ENCODE measurements at regions of chr1 and their contacts with region 1.

Region 1: DNA sequence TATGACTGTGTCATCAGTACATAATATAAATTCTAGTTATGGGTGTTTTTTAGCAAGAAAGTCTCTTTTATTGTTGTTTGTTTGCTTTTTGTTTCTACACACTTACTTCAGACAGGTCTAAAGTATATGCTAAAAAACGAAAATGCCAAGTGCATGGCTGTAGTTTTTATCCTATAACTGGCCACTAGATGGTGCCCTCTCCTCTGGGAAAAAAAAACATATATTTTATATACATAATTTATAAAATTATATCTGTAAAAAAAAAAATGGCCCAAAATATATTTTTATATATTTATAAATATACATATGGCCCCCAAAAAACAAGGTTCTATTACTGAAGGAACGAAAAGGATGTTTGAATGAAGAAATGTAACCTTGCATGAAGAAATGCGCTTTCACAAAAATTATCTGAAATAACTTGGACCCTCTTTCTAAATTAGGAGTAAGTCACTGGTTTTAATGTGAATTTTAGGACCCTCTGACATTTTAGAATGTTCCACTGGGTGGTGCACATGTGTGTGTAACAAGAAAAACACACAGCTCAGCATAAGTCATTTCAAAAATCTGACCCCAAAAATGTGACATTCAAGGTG is 93.5 kb downstream of the TTLL7 start:
- DNase-seq: no peak
- H3K4me3 ChIP-seq: no peak overlapping the region
- H3K27ac ChIP-seq: no peak overlapping the region
- H3K4me1 ChIP-seq: peaks cover 17% of the 10 kb centered on the region
- H3K27me3 ChIP-seq: no peaks in the 10 kb centered on the region
- CTCF ChIP-seq: peak; percentile 80

Region 2: GRCh38 chr1:83920320-83920719 is 14.9 kb after region 1 on chr1:
- CTCF ChIA-PET with region 1: no interaction called
- POLR2A ChIA-PET with region 1: no interaction called
- intact Hi-C with region 1: no loop called
- DNase-seq: no peak
- H3K4me3 ChIP-seq: no peak overlapping the region
- H3K27ac ChIP-seq: no peak overlapping the region
- H3K4me1 ChIP-seq: no peaks in the 10 kb centered on the region
- H3K27me3 ChIP-seq: no peaks in the 10 kb centered on the region
- CTCF ChIP-seq: no peak

Region 3: GRCh38 chr1:84620720-84621313 is 715.4 kb after region 1 on chr1:
- CTCF ChIA-PET with region 1: no interaction called
- POLR2A ChIA-PET with region 1: no interaction called
- intact Hi-C with region 1: loop called (anchors 10 kb)
- DNase-seq: peak; percentile 56 to 86
- H3K4me3 ChIP-seq: peak overlapping the region; percentile 75
- H3K27ac ChIP-seq: peak overlapping the region; percentile 29
- H3K4me1 ChIP-seq: peaks cover 10% of the 10 kb centered on the region
- H3K27me3 ChIP-seq: no peaks in the 10 kb centered on the region
- CTCF ChIP-seq: peak; percentile 97

Region 4: GRCh38 chr1:84772428-84772943 is 867.1 kb after region 1 on chr1:
- CTCF ChIA-PET with region 1: no interaction called
- POLR2A ChIA-PET with region 1: no interaction called
- intact Hi-C with region 1: loop called (anchors 5 kb)
- DNase-seq: peak; percentile 53 to 65
- H3K4me3 ChIP-seq: no peak overlapping the region
- H3K27ac ChIP-seq: no peak overlapping the region
- H3K4me1 ChIP-seq: no peaks in the 10 kb centered on the region
- H3K27me3 ChIP-seq: no peaks in the 10 kb centered on the region
- CTCF ChIP-seq: peak; percentile 98

Region 5: DNA sequence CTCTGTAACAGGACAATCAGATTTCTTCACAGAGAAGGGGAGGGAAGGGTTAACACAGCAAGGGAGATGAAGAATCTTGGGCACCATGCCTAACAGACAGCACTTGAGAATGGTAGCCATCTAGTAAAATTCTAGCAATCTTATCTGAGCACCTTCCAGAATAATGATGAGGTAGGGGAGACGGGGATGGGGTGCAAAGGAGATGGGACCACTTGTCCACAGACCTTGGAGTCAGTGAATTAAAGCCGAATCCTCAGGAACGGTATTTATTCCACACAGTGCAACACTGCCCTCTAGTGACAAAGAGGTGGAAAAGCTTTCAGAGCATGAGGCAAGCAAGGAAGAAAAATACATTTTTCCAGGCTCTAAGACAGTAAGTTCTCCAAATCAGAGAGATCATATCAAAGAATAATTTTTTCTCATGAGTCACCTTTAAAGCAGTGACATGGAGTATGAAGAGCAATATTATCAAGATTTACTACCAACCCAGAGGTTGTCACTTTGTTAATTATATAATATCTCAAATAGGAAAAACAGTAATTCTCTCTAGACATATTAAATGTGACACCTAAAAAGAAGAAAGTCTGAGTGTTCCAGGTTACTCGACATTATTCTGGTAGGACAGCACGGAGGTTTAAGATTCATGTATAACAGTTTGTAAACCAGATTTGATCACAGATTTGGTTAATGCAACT is 1030.9 kb after region 1 on chr1:
- CTCF ChIA-PET with region 1: no interaction called
- POLR2A ChIA-PET with region 1: no interaction called
- intact Hi-C with region 1: loop called (anchors 5 kb)
- DNase-seq: peak; percentile 20 to 56
- H3K4me3 ChIP-seq: no peak overlapping the region
- H3K27ac ChIP-seq: no peak overlapping the region
- H3K4me1 ChIP-seq: no peaks in the 10 kb centered on the region
- H3K27me3 ChIP-seq: no peaks in the 10 kb centered on the region
- CTCF ChIP-seq: peak; percentile 98

Measured in PC-9 (cell line).